ENCODE measurements at regions of chr6 and their contacts with region 1.

Region 1: DNA sequence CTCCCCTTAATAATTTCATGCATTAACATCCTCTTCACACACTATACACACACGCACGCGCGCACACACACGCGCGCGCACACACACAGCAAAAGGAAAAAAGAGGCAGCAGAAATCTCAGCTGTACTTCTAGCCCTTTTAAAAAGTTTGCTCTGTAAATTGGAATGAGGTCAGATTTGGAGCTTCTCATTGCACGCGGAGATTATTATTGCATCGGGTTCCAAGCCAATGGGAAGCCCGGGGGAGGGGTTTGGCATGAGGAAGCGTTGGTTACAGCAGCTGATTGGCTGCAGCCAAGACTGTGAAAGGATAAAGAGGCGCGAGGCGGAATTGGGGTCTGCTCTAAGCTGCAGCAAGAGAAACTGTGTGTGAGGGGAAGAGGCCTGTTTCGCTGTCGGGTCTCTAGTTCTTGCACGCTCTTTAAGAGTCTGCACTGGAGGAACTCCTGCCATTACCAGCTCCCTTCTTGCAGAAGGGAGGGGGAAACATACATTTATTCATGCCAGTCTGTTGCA is at the start of gene SOX4:
- DNase-seq: peak; percentile 98
- H3K4me3 ChIP-seq: peak within 1 kb of the TSS; percentile 94
- H3K27ac ChIP-seq: peak within 1 kb of the TSS; percentile 67
- H3K4me1 ChIP-seq: peaks cover 29% of the 10 kb centered on the region
- CTCF ChIP-seq: no peak
- total RNA-seq, gene SOX4: 55.2 and 55.3 TPM in 2 replicates

Region 2: GRCh38 chr6:20564269-20564668 is 1029.2 kb before region 1 on chr6:
- CTCF ChIA-PET with region 1: interaction called, 12 read pairs
- POLR2A ChIA-PET with region 1: interaction called, 18 read pairs
- intact Hi-C with region 1: loop called (anchors 1 kb)
- DNase-seq: peak; percentile 38
- H3K4me3 ChIP-seq: peak overlapping the region; percentile 39
- H3K27ac ChIP-seq: peak overlapping the region; percentile 48
- H3K4me1 ChIP-seq: peaks cover 22% of the 10 kb centered on the region
- CTCF ChIP-seq: peak; percentile 92

Region 3: DNA sequence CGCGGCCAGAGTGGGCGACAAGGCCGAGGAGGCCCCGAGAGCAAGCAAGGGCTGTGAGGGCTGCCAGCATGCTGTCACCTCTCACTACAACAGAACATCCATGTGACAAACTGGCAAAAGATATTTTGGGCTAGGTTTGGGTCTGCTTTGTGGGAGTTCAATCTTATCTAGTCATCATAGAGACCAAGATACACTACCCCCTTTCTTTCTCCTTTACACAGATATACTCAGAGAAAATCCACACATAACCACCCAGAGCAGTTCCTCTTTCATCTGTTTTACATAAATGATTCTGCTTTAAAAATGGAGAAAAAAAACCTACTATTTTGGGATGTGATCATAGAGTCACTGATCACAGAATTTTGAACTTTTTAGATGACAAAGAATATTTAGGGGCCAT is 16.9 kb after region 1 on chr6:
- CTCF ChIA-PET with region 1: interaction called, 3 read pairs
- POLR2A ChIA-PET with region 1: interaction called, 41 read pairs
- intact Hi-C with region 1: no loop called
- DNase-seq: peak; percentile 68
- H3K4me3 ChIP-seq: peak overlapping the region; percentile 42
- H3K27ac ChIP-seq: peak overlapping the region; percentile 92
- H3K4me1 ChIP-seq: peaks cover 68% of the 10 kb centered on the region
- CTCF ChIP-seq: no peak

Region 4: DNA sequence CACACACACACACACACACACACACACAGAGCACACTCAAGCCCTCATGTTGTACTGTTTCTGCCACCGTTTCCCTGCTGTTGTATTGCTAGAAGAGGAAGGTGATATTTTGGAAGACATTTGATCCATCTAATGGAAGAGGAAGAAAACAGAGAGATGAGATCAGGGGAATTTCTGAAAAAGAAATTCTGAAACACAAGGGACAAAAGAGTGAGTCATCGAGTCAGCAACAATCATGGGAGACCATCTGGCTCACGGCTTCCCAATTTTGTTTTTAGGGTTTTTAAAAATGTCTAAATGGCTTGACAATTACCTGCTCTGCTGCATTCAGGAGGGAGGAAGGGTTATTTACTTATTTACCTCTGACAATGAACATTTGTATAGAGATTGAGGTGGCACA is 22.0 kb after region 1 on chr6:
- CTCF ChIA-PET with region 1: interaction called, 3 read pairs
- POLR2A ChIA-PET with region 1: interaction called, 30 read pairs
- intact Hi-C with region 1: no loop called
- DNase-seq: no peak
- H3K4me3 ChIP-seq: no peak overlapping the region
- H3K27ac ChIP-seq: no peak overlapping the region
- H3K4me1 ChIP-seq: peaks cover 57% of the 10 kb centered on the region
- CTCF ChIP-seq: no peak

Region 5: DNA sequence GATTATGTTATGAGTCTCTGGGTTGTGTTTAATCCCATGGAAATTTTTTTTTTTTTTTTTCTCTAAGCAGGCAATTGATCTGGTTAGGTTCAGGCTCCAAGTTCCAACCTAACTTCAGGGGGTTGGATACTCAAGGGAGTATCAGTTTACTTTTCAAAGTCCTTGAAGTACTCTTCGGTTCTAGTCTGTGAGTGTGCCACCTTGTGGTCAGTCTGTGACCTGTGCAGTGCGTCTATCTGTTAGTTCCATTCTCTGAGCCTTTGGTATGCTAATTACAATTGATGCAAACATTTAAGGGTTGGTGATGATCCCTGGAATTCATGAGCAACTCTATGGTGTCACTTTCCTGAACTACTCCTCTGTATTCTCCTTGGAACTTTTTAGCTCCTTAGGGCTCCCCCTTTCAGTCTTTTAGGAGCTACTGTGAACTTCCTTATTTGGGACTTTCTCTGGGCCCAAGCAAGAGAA is 342.1 kb after region 1 on chr6:
- CTCF ChIA-PET with region 1: no interaction called
- POLR2A ChIA-PET with region 1: no interaction called
- intact Hi-C with region 1: loop called (anchors 2 kb)
- DNase-seq: peak; percentile 68
- H3K4me3 ChIP-seq: no peak overlapping the region
- H3K27ac ChIP-seq: no peak overlapping the region
- H3K4me1 ChIP-seq: no peaks in the 10 kb centered on the region
- CTCF ChIP-seq: peak; percentile 91

Measured in OCI-LY7 (cell line).